ENCODE measurements at regions of chr13 and their contacts with region 1.

Region 1: GRCh38 chr13:102830646-102831045 is 15.2 kb upstream of the ERCC5 start:
- DNase-seq: no peak
- ATAC-seq: no peak

Region 2: DNA sequence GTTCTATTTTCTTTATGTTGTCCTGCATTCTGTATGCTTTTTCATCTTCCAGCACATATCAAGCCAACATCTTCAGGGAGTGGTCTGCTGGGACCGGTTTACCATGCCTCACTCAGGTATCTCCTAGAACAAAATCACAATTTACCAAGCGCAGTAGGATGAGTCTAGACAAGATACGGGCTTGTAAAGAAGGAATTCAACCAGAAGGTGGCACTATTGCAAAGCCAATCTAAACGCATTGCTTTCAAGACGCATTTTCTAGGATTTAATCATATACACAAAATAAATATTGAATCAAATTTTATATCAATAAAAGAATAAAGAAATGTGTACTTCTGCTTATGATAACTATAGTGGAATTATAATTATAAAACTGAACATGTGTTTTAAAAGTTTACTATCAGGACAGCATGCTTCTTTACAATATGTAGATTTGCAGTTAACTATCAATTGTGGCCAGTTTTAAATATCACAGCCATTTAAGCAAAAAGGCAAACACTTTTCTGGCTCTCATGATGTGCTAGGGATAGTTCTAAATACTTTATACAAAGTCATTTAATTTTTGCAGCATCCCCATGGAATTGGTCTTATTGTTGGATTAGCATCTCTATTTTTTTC is 250.0 kb before region 1 on chr13:
- intact Hi-C with region 1: loop called (anchors 10 kb)
- DNase-seq: no peak
- ATAC-seq: peak; percentile 84

Region 3: DNA sequence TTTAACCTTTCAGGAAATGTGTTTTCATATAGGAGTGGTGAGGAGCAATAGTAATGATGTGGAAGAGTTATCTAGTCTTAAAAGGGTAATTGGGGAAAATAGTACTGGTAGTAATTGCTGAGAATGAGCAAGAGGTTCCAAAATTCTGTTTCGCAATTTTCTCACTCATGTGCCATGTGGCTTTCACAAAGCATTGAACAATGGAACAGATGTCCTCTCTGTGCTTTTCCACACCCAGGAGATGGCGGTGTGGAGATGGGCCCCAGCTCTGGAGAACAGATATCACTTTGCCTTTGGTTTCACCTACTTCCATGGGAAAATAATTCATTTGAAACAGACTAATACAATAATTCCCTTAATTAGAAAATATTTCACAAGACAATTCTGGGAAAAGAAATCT is 405.6 kb after region 1 on chr13:
- intact Hi-C with region 1: no loop called
- DNase-seq: no peak
- ATAC-seq: no peak